ENCODE measurements at regions of chr1 and their contacts with region 1.

Region 1: GRCh38 chr1:21511579-21512522 is 2.6 kb downstream of the ALPL start:
- DNase-seq: peak; percentile 62
- H3K4me3 ChIP-seq: no peak overlapping the region
- H3K27ac ChIP-seq: peak overlapping the region; percentile 59
- H3K4me1 ChIP-seq: peaks cover 39% of the 10 kb centered on the region
- H3K27me3 ChIP-seq: peaks cover 27% of the 10 kb centered on the region
- CTCF ChIP-seq: no peak

Region 2: GRCh38 chr1:21439721-21440629 is 71.9 kb before region 1 on chr1 and contains the start of gene NBPF3:
- intact Hi-C with region 1: no loop called
- DNase-seq: peak; percentile 90
- H3K4me3 ChIP-seq: peak within 1 kb of the TSS; percentile 87
- H3K27ac ChIP-seq: peak within 1 kb of the TSS; percentile 64
- H3K4me1 ChIP-seq: peaks cover 27% of the 10 kb centered on the region
- H3K27me3 ChIP-seq: peaks cover 13% of the 10 kb centered on the region
- CTCF ChIP-seq: no peak
- total RNA-seq, gene NBPF3: 5.1 TPM

Region 3: GRCh38 chr1:21534674-21535378 is 23.0 kb after region 1 on chr1:
- intact Hi-C with region 1: no loop called
- DNase-seq: no peak
- H3K4me3 ChIP-seq: no peak overlapping the region
- H3K27ac ChIP-seq: peak overlapping the region; percentile 94
- H3K4me1 ChIP-seq: peaks cover 50% of the 10 kb centered on the region
- H3K27me3 ChIP-seq: no peaks in the 10 kb centered on the region
- CTCF ChIP-seq: peak; percentile 61

Region 4: GRCh38 chr1:21573971-21574465 is 62.2 kb after region 1 on chr1:
- intact Hi-C with region 1: loop called (anchors 10 kb)
- DNase-seq: peak; percentile 86
- H3K4me3 ChIP-seq: peak overlapping the region; percentile 25
- H3K27ac ChIP-seq: peak overlapping the region; percentile 95
- H3K4me1 ChIP-seq: peaks cover 24% of the 10 kb centered on the region
- H3K27me3 ChIP-seq: no peaks in the 10 kb centered on the region
- CTCF ChIP-seq: peak; percentile 79

Measured in left ventricle myocardium inferior (tissue), 1 donor.